BJ (cell line): ENCODE measurements at regions of chr11 and their contacts with region 1.

Region 1: DNA sequence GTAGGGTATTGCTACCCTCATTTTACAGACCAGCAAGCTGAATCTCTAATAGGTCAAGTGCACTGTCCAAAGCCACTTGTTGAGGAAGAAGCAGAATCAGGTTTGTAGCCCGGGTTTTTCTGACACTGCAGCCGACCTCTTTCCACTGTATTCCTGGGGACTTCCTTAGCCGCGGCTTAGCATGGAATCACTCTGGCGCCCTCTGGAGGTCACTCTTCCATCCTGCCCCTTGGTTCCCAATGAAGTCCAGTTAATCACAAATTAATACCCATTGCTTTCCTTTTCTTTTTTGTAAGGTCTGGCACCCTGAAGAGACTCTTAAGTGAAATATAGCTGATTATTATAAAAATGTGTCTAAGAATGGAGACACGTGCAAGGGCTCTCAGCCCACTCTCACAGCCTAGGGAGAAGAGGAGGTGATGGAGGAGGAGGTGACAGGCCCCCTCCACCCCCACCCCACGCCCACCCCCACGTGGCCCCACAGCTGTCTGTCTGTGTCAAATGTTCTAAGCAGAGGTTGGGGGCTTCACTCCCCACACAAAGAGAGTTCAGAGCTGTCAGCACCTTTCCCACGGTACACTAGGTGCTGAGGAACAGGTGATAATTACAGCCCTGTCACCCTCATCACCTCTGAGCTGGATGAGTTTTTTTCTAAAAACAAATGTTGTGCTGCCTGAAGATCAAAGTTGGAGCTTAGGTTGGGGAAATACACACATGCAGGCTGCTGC is 57.7 kb upstream of the DRD2 start:
- DNase-seq: no peak
- H3K4me3 ChIP-seq: no peak overlapping the region
- H3K27me3 ChIP-seq: peaks cover 5% of the 10 kb centered on the region
- CTCF ChIP-seq: peak; percentile 95

Region 2: GRCh38 chr11:113305440-113306336 is 227.2 kb before region 1 on chr11:
- CTCF ChIA-PET with region 1: interaction called, 42 read pairs
- POLR2A ChIA-PET with region 1: no interaction called
- DNase-seq: no peak
- H3K4me3 ChIP-seq: no peak overlapping the region
- H3K27me3 ChIP-seq: 0 out of 2 replicates have a peak, but pooled peaks cover 3% of the 10 kb centered on the region
- CTCF ChIP-seq: peak; percentile 96

Region 3: DNA sequence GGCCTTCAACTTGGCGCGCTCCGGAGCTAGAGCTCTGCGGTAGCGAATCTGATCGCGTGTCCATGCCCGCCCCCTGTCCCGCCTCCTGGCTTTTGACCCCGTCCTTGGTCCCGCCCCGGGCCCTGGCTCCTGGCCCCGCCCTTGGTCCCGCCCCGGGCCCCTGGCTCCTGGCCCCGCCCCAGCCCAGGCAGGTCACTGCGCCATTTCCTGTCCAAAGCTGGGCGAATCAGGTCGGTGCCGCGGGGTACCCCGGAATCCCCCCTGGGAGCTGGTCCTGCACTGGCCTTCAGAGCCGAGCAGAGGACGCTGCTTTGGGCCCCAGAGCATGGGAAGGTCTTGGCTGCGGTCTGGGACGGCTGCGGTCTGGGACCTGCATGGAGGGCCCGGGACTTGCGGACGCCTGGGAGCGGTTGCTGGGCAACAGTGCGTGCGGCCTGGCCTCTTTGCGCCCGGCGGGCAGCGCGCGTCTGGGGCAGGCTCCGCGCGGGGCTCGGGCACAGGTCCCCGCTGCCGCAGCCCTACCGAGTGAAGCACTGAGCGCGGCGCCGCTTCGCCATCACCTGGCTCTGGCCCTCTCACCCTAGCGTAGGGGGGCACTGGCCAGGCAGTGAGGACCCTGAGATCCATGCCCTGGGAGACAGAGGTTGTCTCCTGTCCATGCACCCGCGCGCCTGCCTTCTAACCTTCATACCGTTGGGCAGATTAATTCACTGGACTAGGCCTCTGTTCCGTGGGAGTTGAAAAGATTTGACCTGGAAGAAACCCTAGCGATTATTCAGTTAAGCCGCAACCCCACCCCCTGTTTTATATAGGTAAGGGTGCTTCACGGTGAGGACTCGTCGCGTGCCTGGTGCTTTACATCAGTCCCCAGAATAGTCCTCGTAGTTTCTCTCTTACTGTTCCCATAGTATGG is 218.2 kb before region 1 on chr11 and contains the start of gene TTC12:
- CTCF ChIA-PET with region 1: interaction called, 20 read pairs
- POLR2A ChIA-PET with region 1: no interaction called
- DNase-seq: peak; percentile 52
- H3K4me3 ChIP-seq: peak within 1 kb of the TSS; percentile 83
- H3K27me3 ChIP-seq: no peaks in the 10 kb centered on the region
- CTCF ChIP-seq: no peak
- polyA plus RNA-seq, gene TTC12: 11.2 and 14.0 TPM in 2 replicates

Region 4: DNA sequence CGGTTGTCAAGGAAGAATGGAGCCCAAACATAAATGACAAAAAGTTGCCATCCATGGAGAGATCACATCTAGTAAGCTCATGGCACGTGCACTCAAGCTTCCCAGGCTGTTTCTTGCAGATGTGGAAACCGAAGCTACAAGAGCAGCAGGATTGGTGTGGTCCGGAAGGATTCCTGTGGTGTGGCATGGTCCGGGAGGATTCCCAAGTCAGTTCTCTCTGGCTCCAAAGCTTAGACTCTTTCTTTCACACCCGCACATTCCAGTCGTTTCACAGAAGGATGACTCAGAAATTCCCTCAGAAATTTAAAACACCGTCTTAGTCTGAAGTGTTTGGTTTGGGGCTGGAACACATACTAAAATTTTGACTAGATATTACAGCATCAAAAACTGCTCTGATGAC is 20.4 kb after region 1 on chr11:
- CTCF ChIA-PET with region 1: interaction called, 13 read pairs
- POLR2A ChIA-PET with region 1: no interaction called
- DNase-seq: peak; percentile 96
- H3K4me3 ChIP-seq: no peak overlapping the region
- H3K27me3 ChIP-seq: peaks cover 11% of the 10 kb centered on the region
- CTCF ChIP-seq: no peak

Region 5: GRCh38 chr11:113730887-113731726 is 198.2 kb after region 1 on chr11:
- CTCF ChIA-PET with region 1: interaction called, 31 read pairs
- POLR2A ChIA-PET with region 1: no interaction called
- DNase-seq: peak; percentile 9
- H3K4me3 ChIP-seq: no peak overlapping the region
- H3K27me3 ChIP-seq: no peaks in the 10 kb centered on the region
- CTCF ChIP-seq: peak; percentile 68